Activated CD4-positive, alpha-beta memory T cell treated with anti-CD3 and anti-CD28 coated beads, Interleukin-2, amount 10 ng/mL, durations not matched to agents 7 days and 5 days (primary cell): ENCODE measurements at regions of chr10 and their contacts with region 1.

Region 1: DNA sequence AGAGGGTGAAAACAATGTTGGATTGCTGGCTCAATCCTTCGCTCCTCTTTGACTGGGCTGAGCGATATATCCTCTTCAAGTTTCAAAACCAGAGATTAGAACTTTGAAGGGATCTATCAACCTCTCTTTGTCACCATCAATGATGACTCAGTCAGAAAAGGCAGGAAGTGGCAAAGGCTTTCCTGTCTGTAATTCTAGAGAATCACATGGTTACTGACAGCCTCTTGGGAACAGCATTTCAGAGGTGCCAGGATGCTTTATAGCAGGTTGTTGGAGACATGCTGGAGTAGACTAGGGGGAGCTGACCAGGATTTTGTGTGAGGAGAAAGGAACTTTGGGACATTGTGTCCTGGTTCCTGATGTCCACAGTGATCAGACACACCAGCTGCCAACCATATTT is 81.3 kb downstream of the PRKCQ start:
- DNase-seq: peak; percentile 58
- H3K4me3 Mint-ChIP-seq: peak overlapping the region; percentile 55
- H3K27ac Mint-ChIP-seq: peak overlapping the region; percentile 91
- H3K4me1 Mint-ChIP-seq: peaks cover 32% of the 10 kb centered on the region
- H3K27me3 Mint-ChIP-seq: no peaks in the 10 kb centered on the region

Region 2: DNA sequence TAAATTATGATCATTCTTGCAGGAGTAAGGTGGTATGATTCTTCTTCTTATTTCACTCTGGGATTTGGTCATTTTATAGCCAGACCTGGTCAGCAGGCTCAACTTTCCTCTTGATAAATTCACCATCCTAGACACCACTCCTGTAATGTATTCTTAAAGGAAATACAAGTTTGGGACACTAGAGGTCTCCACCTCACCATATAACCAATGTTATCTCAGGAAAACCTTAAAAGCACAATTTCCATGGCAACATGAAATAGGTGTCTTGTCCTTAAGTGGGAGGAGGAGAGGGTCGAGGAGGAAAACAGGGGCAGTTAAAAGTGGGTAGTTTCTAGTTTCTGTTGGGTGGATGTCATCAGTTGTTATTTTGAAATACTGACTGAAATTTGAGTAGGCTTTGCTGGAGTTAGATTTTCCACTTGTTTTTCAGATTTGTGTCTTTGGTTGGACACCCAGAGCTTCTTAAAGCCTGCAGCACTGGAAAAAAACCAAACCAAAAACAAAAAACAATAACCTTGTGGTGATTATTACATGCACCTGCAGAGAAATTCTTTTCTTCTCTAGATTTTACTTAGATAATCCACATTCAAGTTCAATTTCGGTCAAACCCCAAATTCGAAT is 81.8 kb before region 1 on chr10:
- CTCF ChIA-PET with region 1: no interaction called
- POLR2A ChIA-PET with region 1: no interaction called
- DNase-seq: no peak
- H3K4me3 Mint-ChIP-seq: no peak overlapping the region
- H3K27ac Mint-ChIP-seq: no peak overlapping the region
- H3K4me1 Mint-ChIP-seq: no peaks in the 10 kb centered on the region
- H3K27me3 Mint-ChIP-seq: no peaks in the 10 kb centered on the region

Region 3: DNA sequence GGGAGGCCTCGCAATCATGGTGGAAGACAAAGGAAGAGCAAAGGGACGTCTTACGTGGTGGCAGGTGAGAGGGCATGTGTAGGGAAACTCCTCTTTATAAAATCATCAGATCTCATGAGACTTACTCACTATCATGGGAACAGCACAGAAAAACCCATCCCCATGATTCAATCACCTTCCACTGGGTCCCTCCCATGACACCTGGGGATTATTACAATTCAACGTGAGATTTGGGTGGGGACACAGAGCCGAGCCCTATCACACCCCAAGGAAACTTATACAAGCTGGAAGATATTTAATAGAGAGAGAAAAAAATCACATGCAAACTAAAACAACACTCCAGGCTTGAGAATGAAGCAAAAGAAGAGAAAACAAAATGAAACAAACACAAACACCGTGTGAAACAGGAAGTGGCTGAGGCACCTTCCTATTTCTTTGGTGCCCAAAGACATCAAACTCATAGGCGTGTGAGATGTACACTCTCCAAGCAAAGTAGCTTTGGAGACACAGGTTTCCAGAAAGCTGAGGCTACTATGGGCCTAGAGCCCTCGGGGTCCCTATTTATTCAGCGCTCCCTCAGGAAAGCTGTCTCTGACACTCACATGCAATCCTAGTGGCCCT is 15.9 kb before region 1 on chr10:
- CTCF ChIA-PET with region 1: no interaction called
- POLR2A ChIA-PET with region 1: interaction called, 23 read pairs
- DNase-seq: peak; percentile 28
- H3K4me3 Mint-ChIP-seq: no peak overlapping the region
- H3K27ac Mint-ChIP-seq: peak overlapping the region; percentile 72
- H3K4me1 Mint-ChIP-seq: peaks cover 62% of the 10 kb centered on the region
- H3K27me3 Mint-ChIP-seq: no peaks in the 10 kb centered on the region